ENCODE measurements at regions of chr9 and their contacts with region 1.

Region 1: DNA sequence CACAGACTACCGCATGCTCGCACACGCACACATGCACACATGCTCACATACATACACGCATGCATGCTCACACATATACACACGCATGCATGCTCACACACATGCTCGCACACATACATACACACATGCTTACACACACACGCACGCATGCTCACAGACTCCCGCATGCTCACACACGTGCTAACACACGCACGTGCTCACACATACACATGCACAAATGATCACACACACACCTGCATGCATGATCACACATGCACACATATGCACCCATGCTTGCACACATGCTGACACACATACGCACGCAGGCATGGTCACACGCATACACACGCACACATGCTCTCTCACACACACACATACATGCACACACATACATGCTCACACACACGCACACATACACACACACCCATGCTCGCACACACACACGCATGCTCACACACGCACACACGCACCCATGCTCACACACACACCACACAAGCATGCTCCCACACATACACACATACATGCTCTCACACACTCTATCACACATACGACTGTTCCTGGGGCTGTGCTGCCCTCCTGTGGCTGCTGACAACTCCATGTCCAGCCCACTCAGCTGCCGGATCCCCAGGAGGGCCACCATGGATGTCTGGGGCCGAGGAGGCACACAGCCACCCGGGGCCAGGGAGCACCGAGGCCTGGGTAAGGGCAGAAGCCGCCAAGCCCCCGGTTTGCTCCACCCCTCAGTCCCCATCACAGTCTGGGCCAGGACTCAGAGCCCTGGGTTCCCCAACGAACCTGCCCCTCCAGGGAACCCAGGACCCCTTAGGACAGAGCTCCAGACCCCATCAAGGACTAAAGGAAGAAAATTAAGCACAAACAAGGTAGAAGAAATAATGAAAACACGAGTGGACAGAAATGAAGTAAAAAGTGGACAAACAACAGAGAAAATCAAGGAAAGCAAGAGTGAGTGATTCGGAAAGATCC is 31.4 kb upstream of the EGFL7 start:
- DNase-seq: peak; percentile 79 to 84 (median 81)
- H3K4me3 ChIP-seq: no peak overlapping the region
- H3K4me3 Mint-ChIP-seq: no peak overlapping the region
- H3K27ac ChIP-seq: no peak overlapping the region
- H3K27ac Mint-ChIP-seq: no peak overlapping the region
- H3K4me1 ChIP-seq: peaks cover 6% of the 10 kb centered on the region
- H3K4me1 Mint-ChIP-seq: peaks cover 0 to 3% (median 1%) of the 10 kb centered on the region in 4 donors
- H3K27me3 ChIP-seq: no peaks in the 10 kb centered on the region
- H3K27me3 Mint-ChIP-seq: peaks cover 0 to 3% of the 10 kb centered on the region in 2 donors

Region 2: DNA sequence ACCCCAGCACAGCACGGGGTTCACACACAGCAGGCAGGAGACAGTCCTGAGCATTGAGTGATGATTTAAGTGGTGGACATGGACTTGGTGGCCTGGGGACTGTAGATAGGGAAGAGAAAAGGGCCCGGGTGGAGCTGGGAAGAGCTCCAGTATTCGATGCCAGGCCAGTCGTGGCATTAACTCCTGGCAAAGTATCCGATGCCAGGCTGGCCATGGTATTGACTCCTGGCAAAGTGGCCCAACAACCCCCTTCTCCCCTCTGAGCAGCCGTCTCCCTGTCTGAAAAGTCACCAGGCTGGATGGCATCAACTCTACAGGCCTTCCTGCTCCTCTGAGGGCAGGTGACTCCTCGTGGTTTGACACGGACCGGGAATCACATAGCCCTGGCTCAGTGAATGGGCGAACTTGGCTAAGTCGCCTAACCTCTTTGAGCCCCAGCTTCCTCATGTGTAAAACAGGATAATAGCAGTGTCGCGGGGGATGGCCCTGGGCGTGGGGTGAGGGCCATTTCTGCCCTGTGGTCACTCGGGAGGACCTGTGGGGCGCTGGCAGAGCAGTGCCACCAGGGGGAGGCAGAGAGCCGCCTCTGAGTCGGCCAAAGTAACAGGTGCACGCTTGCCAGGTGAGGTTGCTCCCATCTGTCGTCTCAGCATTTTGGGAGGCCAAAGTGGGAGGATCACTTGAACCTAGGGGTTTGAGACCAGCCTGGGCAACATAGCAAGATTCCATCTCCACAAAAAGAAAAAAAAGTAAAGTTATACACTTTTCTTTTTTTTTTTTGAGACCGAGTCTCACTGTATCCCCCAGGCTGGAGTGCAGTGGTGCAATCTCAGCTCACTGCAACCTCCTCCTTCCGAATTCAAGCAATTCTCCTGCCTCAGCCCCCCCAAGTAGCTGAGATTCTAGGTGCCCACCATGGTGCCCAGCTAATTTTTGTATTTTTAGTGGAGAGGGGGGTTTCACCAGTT is 142.8 kb before region 1 on chr9:
- CTCF ChIA-PET with region 1: interaction called, 120 read pairs
- POLR2A ChIA-PET with region 1: interaction called, 14 read pairs
- intact Hi-C with region 1: no loop called
- DNase-seq: peak; percentile 62 to 77 (median 69)
- H3K4me3 ChIP-seq: no peak overlapping the region
- H3K4me3 Mint-ChIP-seq: no peak overlapping the region
- H3K27ac ChIP-seq: no peak overlapping the region
- H3K27ac Mint-ChIP-seq: peak overlapping the region in 1 of 7 donors; percentile 41
- H3K4me1 ChIP-seq: peaks cover 15% of the 10 kb centered on the region
- H3K4me1 Mint-ChIP-seq: peaks cover 0 to 8% (median 4%) of the 10 kb centered on the region in 4 donors
- H3K27me3 ChIP-seq: no peaks in the 10 kb centered on the region
- H3K27me3 Mint-ChIP-seq: no peaks in the 10 kb centered on the region

Region 3: GRCh38 chr9:136619742-136620440 is 11.4 kb before region 1 on chr9:
- CTCF ChIA-PET with region 1: no interaction called
- POLR2A ChIA-PET with region 1: no interaction called
- intact Hi-C with region 1: no loop called
- DNase-seq: peak in 1 of 5 donors; percentile 11
- H3K4me3 ChIP-seq: no peak overlapping the region
- H3K4me3 Mint-ChIP-seq: no peak overlapping the region
- H3K27ac ChIP-seq: no peak overlapping the region
- H3K27ac Mint-ChIP-seq: no peak overlapping the region
- H3K4me1 ChIP-seq: no peaks in the 10 kb centered on the region
- H3K4me1 Mint-ChIP-seq: peaks cover 0 to 2% (median 0%) of the 10 kb centered on the region in 4 donors
- H3K27me3 ChIP-seq: no peaks in the 10 kb centered on the region
- H3K27me3 Mint-ChIP-seq: peaks cover 0 to 4% of the 10 kb centered on the region in 2 donors

Measured in CD4-positive, alpha-beta memory T cell (primary cell).